Mammary epithelial cell (primary cell): ENCODE measurements at regions of chr15 and their contacts with region 1.

Region 1: GRCh38 chr15:39580117-39580484 is 778 bp upstream of the THBS1 start:
- DNase-seq: peak; percentile 92
- H3K4me3 ChIP-seq: peak overlapping the region; percentile 51 to 67 (median 62)
- H3K27ac ChIP-seq: peak overlapping the region; percentile 92
- H3K4me1 ChIP-seq: peaks cover 25% of the 10 kb centered on the region
- H3K27me3 ChIP-seq: no peaks in the 10 kb centered on the region
- CTCF ChIP-seq: peak; percentile 77 to 92

Region 2: DNA sequence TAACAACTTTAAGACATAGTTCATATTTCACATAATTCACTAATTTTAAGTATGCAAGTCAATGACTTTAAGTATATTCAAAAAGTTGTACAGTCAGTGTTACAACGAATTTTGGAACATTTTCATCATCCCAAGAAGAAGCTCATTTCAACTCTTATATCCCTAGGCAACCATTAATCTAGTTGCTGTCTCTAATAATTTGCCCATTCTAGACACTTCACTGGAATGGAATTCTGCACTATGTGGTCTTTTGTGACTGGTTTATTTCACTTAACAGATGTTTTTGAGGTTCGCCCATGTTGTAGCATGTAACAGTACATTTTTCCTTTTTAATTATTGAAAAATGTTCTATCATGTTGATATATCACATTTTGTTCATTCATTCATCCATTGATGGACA is 1431.6 kb before region 1 on chr15:
- CTCF ChIA-PET with region 1: no interaction called
- dilution Hi-C with region 1: no loop called
- in situ Hi-C with region 1: no loop called
- intact Hi-C with region 1: no loop called
- DNase-seq: no peak
- H3K4me3 ChIP-seq: no peak overlapping the region
- H3K27ac ChIP-seq: no peak overlapping the region
- H3K4me1 ChIP-seq: no peaks in the 10 kb centered on the region
- H3K27me3 ChIP-seq: no peaks in the 10 kb centered on the region
- CTCF ChIP-seq: no peak

Region 3: GRCh38 chr15:38707802-38708671 is 872.1 kb before region 1 on chr15:
- CTCF ChIA-PET with region 1: no interaction called
- dilution Hi-C with region 1: no loop called
- in situ Hi-C with region 1: loop called (anchors 5 to 25 kb)
- intact Hi-C with region 1: loop called (anchors 1 kb)
- DNase-seq: peak; percentile 52
- H3K4me3 ChIP-seq: no peak overlapping the region
- H3K27ac ChIP-seq: no peak overlapping the region
- H3K4me1 ChIP-seq: no peaks in the 10 kb centered on the region
- H3K27me3 ChIP-seq: no peaks in the 10 kb centered on the region
- CTCF ChIP-seq: peak; percentile 74 to 78

Region 4: GRCh38 chr15:39125904-39126303 is 454.2 kb before region 1 on chr15:
- CTCF ChIA-PET with region 1: no interaction called
- dilution Hi-C with region 1: no loop called
- in situ Hi-C with region 1: no loop called
- intact Hi-C with region 1: loop called (anchors 5 kb)
- DNase-seq: no peak
- H3K4me3 ChIP-seq: no peak overlapping the region
- H3K27ac ChIP-seq: no peak overlapping the region
- H3K4me1 ChIP-seq: peaks cover 60% of the 10 kb centered on the region
- H3K27me3 ChIP-seq: no peaks in the 10 kb centered on the region
- CTCF ChIP-seq: peak; percentile 63 to 77

Region 5: DNA sequence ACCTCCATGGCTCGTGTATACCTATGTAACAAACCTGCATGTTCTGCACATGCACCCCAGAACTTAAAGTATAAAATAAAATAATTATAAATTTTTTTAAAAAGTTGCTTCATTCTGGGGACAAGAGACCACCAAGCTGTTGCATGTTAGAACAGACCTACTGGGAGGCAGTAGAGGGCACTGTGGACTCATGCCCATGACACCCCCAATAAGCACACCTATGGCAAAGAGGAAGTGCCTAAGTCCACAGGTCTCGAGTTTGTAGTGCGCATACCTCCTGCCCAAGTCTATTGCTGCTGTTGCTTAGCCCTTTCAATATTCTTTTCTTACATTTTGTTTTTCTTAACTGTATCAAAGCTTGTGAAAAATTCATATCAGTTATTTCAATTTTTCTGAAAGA is 267.1 kb before region 1 on chr15:
- CTCF ChIA-PET with region 1: no interaction called
- dilution Hi-C with region 1: no loop called
- in situ Hi-C with region 1: no loop called
- intact Hi-C with region 1: loop called (anchors 1 kb)
- DNase-seq: no peak
- H3K4me3 ChIP-seq: no peak overlapping the region
- H3K27ac ChIP-seq: no peak overlapping the region
- H3K4me1 ChIP-seq: peaks cover 6% of the 10 kb centered on the region
- H3K27me3 ChIP-seq: no peaks in the 10 kb centered on the region
- CTCF ChIP-seq: peak in 1 of 2 donors; percentile 22

Region 6: DNA sequence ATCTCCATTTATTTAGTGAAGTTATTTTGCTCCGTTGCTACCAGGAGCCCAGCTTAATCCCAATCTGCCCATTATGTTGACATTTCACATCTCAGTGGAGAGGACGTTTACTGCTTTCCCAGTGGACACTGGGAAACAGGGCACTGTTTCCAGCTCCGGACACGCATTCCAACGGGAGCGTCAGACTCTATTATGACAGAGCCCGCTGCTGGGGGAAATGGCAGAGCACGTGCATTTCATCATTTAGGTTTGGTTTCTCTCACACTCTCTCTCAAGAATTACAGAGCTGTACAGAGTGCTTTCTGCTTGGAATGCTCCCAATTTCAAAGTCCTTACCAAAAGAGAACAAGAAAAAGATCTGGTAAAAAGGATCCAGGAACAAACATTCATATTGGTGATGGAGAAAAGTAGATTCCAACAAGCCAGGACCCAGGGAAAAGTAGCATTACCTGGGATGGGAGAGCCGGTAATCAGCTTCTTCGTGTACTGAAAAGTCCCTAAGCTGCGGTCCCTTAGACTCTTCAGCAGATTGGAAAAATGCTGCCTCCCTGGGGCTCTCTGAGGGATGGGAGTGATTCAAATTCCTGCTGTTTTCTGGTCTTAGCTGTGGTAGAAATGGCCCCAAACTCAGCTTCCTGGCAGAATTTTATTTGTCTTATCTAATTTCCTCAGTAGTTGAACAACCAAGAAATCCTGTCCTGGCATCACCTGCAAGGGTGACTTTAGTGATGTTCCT is 135.2 kb before region 1 on chr15:
- CTCF ChIA-PET with region 1: no interaction called
- dilution Hi-C with region 1: no loop called
- in situ Hi-C with region 1: no loop called
- intact Hi-C with region 1: loop called (anchors 10 kb)
- DNase-seq: no peak
- H3K4me3 ChIP-seq: no peak overlapping the region
- H3K27ac ChIP-seq: no peak overlapping the region
- H3K4me1 ChIP-seq: no peaks in the 10 kb centered on the region
- H3K27me3 ChIP-seq: no peaks in the 10 kb centered on the region
- CTCF ChIP-seq: no peak

Region 7: DNA sequence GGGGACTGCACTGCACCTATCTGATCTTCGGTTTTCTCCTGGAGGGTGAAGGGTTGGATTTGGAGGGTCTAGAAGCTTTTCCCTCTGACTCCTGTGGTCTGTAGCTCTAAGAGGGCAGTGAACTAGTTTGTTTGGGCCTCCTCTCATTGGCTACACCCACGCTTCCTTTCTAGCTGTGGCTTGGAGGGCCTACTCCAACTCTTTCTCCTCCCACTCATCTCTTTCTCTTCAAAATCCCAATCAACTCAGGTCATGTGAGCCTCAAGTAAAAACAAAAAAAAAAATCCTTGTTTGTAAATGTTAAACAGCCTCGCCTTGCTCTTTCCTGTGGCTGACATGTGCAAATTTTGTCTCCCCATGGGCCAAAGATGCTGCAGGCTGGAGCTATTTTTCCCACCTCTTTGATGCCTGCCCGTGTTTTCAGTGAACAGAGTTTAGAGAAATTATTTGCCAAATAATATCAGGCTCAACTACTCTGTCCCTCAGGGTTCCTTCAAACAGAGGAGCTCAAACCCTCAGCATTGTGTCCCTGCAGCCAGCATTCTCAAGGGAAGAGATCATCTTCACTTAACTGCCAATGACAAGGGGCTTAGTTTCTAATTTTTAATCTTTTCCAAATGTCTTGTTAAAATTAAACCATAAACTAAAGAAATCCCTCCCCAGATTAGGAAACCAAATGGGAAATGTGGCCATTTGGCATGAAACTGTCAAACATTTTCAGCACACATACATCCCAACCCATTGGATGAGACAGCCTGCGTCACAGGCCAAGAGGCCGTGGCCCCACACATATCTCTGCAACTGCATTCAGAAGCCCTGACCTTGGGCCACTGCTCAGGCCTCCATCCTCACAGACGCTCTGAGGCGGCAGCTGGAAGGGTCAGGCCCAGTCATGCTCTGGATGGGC is 114.0 kb before region 1 on chr15:
- CTCF ChIA-PET with region 1: no interaction called
- dilution Hi-C with region 1: no loop called
- in situ Hi-C with region 1: no loop called
- intact Hi-C with region 1: no loop called
- DNase-seq: no peak
- H3K4me3 ChIP-seq: no peak overlapping the region
- H3K27ac ChIP-seq: no peak overlapping the region
- H3K4me1 ChIP-seq: no peaks in the 10 kb centered on the region
- H3K27me3 ChIP-seq: no peaks in the 10 kb centered on the region
- CTCF ChIP-seq: no peak

Region 8: DNA sequence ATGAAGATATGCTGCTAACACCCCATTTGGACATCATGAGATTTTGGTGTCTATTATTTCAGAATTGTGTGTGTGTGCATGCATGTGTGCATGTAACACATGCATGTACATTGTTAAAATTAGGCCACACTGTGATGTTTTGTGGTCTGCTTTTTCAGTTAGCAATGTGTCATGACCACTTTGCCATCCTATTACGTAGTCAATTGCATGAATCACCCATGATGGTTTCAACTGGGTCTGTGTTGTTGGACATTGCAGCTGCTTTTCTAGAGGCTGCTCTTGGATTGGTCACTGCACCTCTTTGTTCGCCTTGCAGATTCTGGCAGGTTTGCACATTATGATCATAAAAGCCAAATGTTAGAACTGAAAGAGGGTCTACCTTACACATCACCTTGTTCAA is 100.2 kb before region 1 on chr15:
- CTCF ChIA-PET with region 1: no interaction called
- dilution Hi-C with region 1: no loop called
- in situ Hi-C with region 1: no loop called
- intact Hi-C with region 1: no loop called
- DNase-seq: peak; percentile 66
- H3K4me3 ChIP-seq: no peak overlapping the region
- H3K27ac ChIP-seq: no peak overlapping the region
- H3K4me1 ChIP-seq: no peaks in the 10 kb centered on the region
- H3K27me3 ChIP-seq: no peaks in the 10 kb centered on the region
- CTCF ChIP-seq: no peak

Region 9: GRCh38 chr15:39686000-39686613 is 106.0 kb after region 1 on chr15:
- CTCF ChIA-PET with region 1: no interaction called
- dilution Hi-C with region 1: no loop called
- in situ Hi-C with region 1: no loop called
- intact Hi-C with region 1: loop called (anchors 2 kb)
- DNase-seq: peak; percentile 36
- H3K4me3 ChIP-seq: no peak overlapping the region
- H3K27ac ChIP-seq: no peak overlapping the region
- H3K4me1 ChIP-seq: no peaks in the 10 kb centered on the region
- H3K27me3 ChIP-seq: no peaks in the 10 kb centered on the region
- CTCF ChIP-seq: peak; percentile 70 to 71

Region 10: DNA sequence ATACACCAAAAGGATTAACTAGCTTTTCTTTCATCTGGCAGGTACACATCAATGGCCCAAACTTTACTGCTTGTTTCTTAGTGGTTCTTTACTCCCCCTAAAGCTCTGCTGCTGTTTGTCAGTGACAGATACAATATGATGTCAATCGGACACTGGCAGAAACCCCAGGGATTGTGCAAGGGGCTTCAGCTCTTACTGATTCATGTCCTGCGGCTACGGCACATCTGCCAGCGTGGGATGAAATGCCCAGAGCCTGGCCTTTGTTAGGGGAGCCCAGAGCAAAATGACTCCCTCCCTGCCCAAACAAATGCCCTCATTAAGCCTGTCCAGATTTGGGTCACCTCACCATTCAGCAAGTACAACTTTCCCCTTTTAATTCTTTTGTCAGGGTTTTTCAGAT is 430.6 kb after region 1 on chr15:
- CTCF ChIA-PET with region 1: no interaction called
- dilution Hi-C with region 1: no loop called
- in situ Hi-C with region 1: no loop called
- intact Hi-C with region 1: no loop called
- DNase-seq: peak; percentile 78
- H3K4me3 ChIP-seq: no peak overlapping the region
- H3K27ac ChIP-seq: no peak overlapping the region
- H3K4me1 ChIP-seq: peaks cover 5% of the 10 kb centered on the region
- H3K27me3 ChIP-seq: no peaks in the 10 kb centered on the region
- CTCF ChIP-seq: no peak